K562 (cell line): ENCODE measurements at regions of chr6 and their contacts with region 1.

Region 1: DNA sequence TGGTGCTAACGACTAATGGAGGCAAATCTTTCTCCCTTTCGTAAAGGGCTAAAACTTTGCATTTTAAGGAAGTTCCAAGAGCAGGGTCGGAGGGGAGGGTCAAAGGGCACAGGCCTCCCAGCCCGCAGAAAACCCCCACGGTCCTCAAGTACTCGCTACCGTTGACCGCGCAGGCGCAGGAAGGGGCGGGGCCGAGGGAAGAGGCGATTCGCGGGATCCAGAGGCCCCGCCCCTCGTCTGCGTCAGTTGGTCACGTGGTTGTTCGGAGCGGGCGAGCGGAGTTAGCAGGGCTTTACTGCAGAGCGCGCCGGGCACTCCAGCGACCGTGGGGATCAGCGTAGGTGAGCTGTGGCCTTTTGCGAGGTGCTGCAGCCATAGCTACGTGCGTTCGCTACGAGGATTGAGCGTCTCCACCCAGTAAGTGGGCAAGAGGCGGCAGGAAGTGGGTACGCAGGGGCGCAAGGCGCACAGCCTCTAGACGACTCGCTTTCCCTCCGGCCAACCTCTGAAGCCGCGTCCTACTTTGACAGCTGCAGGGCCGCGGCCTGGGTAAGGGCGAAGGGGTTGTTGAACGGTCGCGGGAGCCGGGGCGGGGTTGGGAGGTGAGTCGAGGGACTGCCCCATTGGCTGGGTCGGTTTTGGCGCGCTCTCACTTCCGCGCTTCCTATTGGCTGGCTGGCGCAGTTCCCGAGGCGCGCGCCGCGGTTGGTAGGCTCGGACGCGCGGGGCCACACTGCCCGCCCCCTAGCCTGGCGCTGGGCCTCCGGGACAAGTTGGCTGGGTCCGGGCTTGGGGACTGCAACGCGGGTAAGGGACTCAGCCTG is at the start of gene GMNN:
- DNase-seq: peak; percentile 99 to 100 (median 99)
- ATAC-seq: peak; percentile 95
- H3K4me3 ChIP-seq: peak within 1 kb of the TSS; percentile 67
- H3K27ac ChIP-seq: peak within 1 kb of the TSS; percentile 99
- H3K4me1 ChIP-seq: peaks cover 8 to 12% of the 10 kb centered on the region in 2 experiments; a peak in 4 of 5 replicates
- H3K27me3 ChIP-seq: no peaks in the 10 kb centered on the region
- CTCF ChIP-seq: no peak
- EP300 ChIP-seq: peak; percentile 7
- POLR2A ChIP-seq: peak; percentile 99
- RAD21 ChIP-seq: no peak
- polyA plus RNA-seq, gene GMNN: 331 to 370 TPM

Region 2: DNA sequence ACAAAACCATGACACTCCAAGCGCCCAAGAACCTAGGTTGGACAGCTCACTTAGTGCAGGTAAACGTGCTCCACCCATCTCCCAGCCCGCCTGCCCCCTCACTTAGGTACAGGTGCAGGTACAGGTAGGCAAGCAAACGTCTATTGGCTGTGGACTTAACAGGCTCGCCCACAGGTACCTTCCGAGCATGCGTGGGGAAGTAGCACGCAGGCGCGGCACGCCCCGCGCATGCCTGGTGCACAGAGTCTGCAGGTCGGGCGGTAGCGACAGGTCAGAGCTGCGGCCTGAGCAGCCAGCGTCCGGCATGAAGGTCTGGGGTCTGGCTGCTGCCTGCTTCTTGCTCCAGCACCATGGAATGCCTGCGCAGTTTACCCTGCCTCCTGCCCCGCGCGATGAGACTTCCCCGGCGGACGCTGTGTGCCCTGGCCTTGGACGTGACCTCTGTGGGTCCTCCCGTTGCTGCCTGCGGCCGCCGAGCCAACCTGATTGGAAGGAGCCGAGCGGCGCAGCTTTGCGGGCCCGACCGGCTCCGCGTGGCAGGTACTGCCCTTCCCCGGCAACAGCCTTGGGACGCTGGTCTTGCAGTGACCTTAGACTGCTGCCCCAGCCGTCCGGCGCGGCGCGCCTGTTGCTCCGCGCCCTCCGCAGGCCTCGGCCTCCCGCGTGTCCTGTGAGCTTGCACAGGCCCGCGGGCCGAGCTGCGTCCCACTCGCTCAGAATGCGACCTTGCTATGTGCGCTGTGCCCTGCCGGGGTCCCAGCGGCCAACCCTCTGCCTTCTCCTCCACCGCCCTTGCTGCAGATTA is 372.0 kb before region 1 on chr6 and contains the start of gene MRS2:
- CTCF ChIA-PET with region 1: no interaction called
- POLR2A ChIA-PET with region 1: no interaction called
- in situ Hi-C with region 1: no loop called
- intact Hi-C with region 1: loop called (anchors 5 kb)
- DNase-seq: peak; percentile 79 to 95 (median 88)
- ATAC-seq: peak; percentile 98
- H3K4me3 ChIP-seq: peak within 1 kb of the TSS; percentile 85
- H3K27ac ChIP-seq: peak within 1 kb of the TSS; percentile 80
- H3K4me1 ChIP-seq: peaks cover 13 to 23% of the 10 kb centered on the region in 2 experiments; a peak in 4 of 5 replicates
- H3K27me3 ChIP-seq: no peaks in the 10 kb centered on the region
- CTCF ChIP-seq: no peak
- EP300 ChIP-seq: no peak
- POLR2A ChIP-seq: peak; percentile 95
- RAD21 ChIP-seq: no peak
- polyA plus RNA-seq, gene MRS2: 14.6 to 23.6 TPM

Region 3: DNA sequence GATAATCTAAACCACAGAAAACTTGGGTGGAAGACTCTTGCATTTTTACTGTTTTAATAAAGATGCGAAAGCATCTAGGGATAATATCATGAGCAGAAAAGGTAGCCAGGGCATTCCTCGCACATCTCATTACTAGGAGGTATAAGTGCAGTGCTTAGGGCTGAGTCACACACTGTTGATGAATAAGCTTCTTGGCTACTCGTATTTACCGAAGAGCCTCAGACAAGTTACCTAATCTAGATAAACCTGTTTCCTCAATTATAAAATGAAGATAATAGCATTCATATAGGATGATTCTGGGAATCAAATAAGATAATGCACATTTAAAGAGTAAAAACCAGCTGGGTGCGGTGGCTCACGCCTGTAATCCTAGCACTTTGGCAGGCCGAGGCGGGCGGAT is 128.1 kb before region 1 on chr6:
- CTCF ChIA-PET with region 1: no interaction called
- POLR2A ChIA-PET with region 1: no interaction called
- in situ Hi-C with region 1: no loop called
- intact Hi-C with region 1: no loop called
- DNase-seq: no peak
- ATAC-seq: no peak
- H3K4me3 ChIP-seq: no peak overlapping the region
- H3K27ac ChIP-seq: no peak overlapping the region
- H3K4me1 ChIP-seq: peaks cover 7 to 11% of the 10 kb centered on the region in 2 experiments; a peak in 4 of 5 replicates
- H3K27me3 ChIP-seq: peaks cover 8 to 10% of the 10 kb centered on the region in 2 experiments; a peak in 3 of 5 replicates
- CTCF ChIP-seq: no peak
- EP300 ChIP-seq: no peak
- POLR2A ChIP-seq: no peak
- RAD21 ChIP-seq: no peak

Region 4: DNA sequence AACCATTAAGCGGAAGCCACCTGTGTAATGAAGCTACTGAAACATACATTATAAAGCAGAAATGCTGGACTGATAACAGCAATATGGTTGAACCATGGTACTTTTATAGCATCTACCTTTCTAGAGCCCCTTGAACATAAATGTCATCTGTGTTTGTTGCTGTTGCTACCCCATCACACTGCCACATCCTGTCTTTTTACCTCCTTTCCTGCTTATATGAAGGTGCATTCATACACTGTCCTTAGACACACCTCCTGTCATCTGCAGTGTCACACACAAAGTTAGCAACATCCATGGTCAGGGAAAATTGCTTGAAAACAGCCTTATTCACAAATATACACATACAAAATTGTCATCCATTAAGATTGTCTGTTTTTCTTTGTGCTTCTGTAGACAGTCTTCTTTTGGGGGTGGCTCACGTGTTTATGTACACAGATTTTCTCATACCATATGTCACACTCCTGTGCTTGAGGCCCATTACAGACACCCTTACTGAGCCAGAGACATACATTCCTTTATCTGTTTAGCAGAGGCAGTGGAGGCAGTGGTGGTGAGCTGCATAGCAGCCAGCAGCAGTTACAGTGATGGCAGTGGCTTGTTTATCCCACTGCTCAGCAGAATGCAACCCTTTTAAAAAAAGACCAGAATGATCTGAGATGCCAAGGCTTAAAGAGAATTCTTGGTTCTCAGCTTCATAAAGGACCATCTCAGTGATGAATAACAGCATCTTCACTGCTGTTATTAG is 81.9 kb before region 1 on chr6:
- CTCF ChIA-PET with region 1: no interaction called
- POLR2A ChIA-PET with region 1: no interaction called
- in situ Hi-C with region 1: no loop called
- intact Hi-C with region 1: no loop called
- DNase-seq: no peak
- ATAC-seq: 0 out of 3 replicates have a peak, but pooled peaks have one; percentile 30
- H3K4me3 ChIP-seq: no peak overlapping the region
- H3K27ac ChIP-seq: no peak overlapping the region
- H3K4me1 ChIP-seq: no peaks in the 10 kb centered on the region
- H3K27me3 ChIP-seq: no peaks in the 10 kb centered on the region
- CTCF ChIP-seq: no peak
- EP300 ChIP-seq: no peak
- POLR2A ChIP-seq: no peak
- RAD21 ChIP-seq: no peak

Region 5: GRCh38 chr6:24788048-24788665 is 13.2 kb after region 1 on chr6:
- CTCF ChIA-PET with region 1: no interaction called
- POLR2A ChIA-PET with region 1: interaction called, 25 read pairs
- in situ Hi-C with region 1: no loop called
- intact Hi-C with region 1: no loop called
- DNase-seq: no peak
- ATAC-seq: peak; percentile 8; the same call in 2 of the 3 replicates
- H3K4me3 ChIP-seq: no peak overlapping the region
- H3K27ac ChIP-seq: no peak overlapping the region
- H3K4me1 ChIP-seq: no peaks in the 10 kb centered on the region
- H3K27me3 ChIP-seq: no peaks in the 10 kb centered on the region
- CTCF ChIP-seq: no peak
- EP300 ChIP-seq: no peak
- POLR2A ChIP-seq: peak; percentile 36; the same call in 1 of the 2 replicates
- RAD21 ChIP-seq: no peak